Heart right ventricle (tissue), 16 donors: ENCODE measurements at regions of chr11 and their contacts with region 1.

Region 1: DNA sequence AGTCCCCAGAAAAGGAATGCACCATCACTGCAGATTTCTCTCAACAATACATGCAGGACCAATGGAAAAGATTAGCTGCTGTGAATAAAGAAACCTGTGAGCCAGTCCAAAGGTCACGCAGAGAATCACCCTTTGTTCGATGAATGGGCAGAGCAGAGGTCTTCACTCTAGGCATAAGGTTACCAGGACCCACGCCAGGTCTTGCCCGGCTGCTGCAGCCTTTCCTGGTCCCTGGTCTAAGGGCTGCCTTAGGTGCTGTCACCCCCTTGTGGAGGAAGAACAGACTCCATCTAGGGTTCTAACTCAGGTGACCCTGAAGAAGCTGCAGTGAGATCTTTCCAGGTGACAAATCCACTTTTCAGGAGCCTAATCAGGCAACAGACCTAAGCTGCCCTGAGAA is 29.0 kb upstream of the NAP1L4 start:
- DNase-seq: no peak
- ATAC-seq: peak in 6 of 8 donors; percentile 42 to 66 (median 58)
- H3K4me3 ChIP-seq: no peak overlapping the region
- H3K27ac ChIP-seq: no peak overlapping the region
- H3K4me1 ChIP-seq: peaks cover 0 to 21% (median 9%) of the 10 kb centered on the region in 9 donors
- H3K27me3 ChIP-seq: no peaks in the 10 kb centered on the region
- CTCF ChIP-seq: peak in 8 of 9 donors; percentile 14 to 57 (median 51)

Region 2: GRCh38 chr11:2975594-2975993 is 45.5 kb before region 1 on chr11:
- intact Hi-C with region 1: loop called in 1 of 10 experiments (anchors 10 kb)
- DNase-seq: peak in 1 of 2 donors; percentile 20
- ATAC-seq: peak; percentile 54 to 84 (median 80)
- H3K4me3 ChIP-seq: no peak overlapping the region
- H3K27ac ChIP-seq: no peak overlapping the region
- H3K4me1 ChIP-seq: peaks cover 0 to 36% (median 11%) of the 10 kb centered on the region in 9 donors
- H3K27me3 ChIP-seq: no peaks in the 10 kb centered on the region
- CTCF ChIP-seq: peak; percentile 11 to 66 (median 46)